Ovary (tissue), 10 donors: ENCODE measurements at regions of chr4 and their contacts with region 1.

Region 1: DNA sequence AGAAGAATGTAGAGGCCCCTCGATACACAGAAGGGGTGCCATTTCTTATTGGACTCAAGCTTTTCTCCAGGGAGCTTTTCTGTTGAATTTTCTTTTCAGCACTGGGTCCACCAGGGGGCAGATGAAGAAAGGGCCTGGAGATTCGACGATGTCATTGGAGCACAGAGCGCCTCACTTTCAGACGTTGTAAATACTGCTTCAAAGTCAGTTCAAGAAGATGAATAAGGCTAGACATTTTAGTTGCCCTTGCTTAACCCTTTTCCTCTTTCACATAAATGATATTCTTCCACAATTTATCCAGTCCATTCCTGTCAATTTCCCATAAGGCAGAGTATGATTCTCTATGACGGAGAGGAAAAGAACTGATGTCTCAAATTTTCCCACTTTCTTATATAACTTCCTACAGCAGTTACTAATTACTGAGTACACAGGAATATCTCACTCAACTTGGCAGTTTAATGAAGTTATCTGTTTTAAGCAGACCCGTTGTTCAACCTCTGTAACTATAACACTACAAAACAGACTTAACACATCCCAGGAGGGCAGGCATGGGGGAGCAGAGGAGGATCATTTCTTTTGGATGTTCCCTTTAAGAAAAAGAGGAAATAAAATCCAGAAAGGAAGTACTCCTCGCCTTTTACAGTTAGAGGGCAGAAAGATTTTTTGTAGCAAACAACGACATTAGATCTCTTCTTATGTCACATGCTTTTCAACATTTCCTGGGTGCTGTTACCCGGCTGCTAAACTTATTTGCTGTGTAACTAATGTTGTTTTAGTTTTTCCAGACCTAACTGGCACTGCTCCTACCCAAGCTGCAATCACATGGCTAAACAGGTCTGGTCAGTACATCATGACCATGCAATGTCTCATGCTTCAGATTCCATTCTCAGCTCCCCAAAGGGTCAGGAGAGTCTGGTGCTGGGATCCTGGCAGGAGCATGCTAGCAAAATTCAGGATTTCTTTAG is 12.2 kb upstream of the CENPU start:
- DNase-seq: peak; percentile 63 to 75 (median 71)
- H3K4me3 ChIP-seq: peak overlapping the region; percentile 5
- H3K27ac ChIP-seq: peak overlapping the region in 1 of 2 donors; percentile 63
- H3K4me1 ChIP-seq: peaks cover 10% of the 10 kb centered on the region
- H3K27me3 ChIP-seq: no peaks in the 10 kb centered on the region
- CTCF ChIP-seq: peak; percentile 18 to 58 (median 49)
- EP300 ChIP-seq: no peak
- POLR2A ChIP-seq: no peak

Region 2: DNA sequence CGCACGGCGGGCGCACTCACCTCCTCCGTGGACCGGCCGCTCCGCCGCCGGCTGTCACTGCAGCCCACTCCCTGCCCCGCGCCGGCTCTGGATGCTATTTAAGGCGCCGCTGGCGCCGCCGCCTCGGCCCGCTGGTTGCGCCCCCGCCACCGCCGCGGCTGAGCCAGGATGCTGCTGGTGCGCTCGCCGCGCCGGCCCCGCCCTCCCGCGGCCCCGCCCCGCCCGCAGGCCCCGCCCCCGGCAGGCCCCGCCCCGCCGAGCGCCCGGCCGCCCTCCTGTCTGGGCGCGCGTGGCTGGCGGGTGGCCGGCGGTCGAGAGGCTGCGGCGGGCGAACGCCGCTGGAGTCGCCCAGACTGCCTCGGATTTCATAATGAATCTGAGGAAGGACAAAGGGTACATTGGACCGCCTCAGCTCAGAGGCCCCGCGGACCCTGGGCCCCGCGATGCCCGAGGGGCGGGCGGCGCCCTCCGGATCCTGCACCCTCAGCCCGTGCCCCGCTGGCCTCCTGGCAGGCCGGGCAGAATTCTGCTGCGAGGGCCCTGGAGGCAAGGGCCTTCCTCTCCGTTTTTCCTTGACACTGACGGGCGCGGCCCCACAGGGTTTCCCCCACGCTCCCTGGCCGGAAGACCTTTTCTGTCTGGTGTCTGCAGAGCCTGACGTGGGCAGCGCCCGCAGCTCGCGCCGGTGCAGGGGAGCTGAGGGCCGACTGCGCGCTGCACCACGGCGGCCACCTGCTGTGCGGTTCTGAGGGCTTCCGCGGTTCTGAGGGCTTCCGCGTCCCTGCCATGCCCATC is 80.0 kb after region 1 on chr4 and contains the start of gene ACSL1:
- intact Hi-C with region 1: loop called in 1 of 4 experiments (anchors 5 kb)
- DNase-seq: peak; percentile 72 to 87 (median 81)
- H3K4me3 ChIP-seq: peak within 1 kb of the TSS; percentile 54
- H3K27ac ChIP-seq: peak within 1 kb of the TSS in 1 of 2 donors; percentile 30
- H3K4me1 ChIP-seq: peaks cover 3% of the 10 kb centered on the region
- H3K27me3 ChIP-seq: no peaks in the 10 kb centered on the region
- CTCF ChIP-seq: no peak
- EP300 ChIP-seq: no peak
- POLR2A ChIP-seq: no peak
- total RNA-seq, gene ACSL1: 12.0 to 47.9 (median 19.8) TPM

Region 3: GRCh38 chr4:185005216-185005819 is 259.2 kb after region 1 on chr4:
- intact Hi-C with region 1: loop called in 1 of 4 experiments (anchors 10 kb)
- DNase-seq: peak; percentile 75 to 87 (median 82)
- H3K4me3 ChIP-seq: no peak overlapping the region
- H3K27ac ChIP-seq: no peak overlapping the region
- H3K4me1 ChIP-seq: peaks cover 6% of the 10 kb centered on the region
- H3K27me3 ChIP-seq: no peaks in the 10 kb centered on the region
- CTCF ChIP-seq: peak; percentile 56 to 84 (median 57)
- EP300 ChIP-seq: no peak
- POLR2A ChIP-seq: no peak